H1 (cell line): ENCODE measurements at regions of chr6 and their contacts with region 1.

Region 1: GRCh38 chr6:38813041-38813823 is 98.1 kb downstream of the DNAH8 start:
- DNase-seq: no peak
- H3K4me3 ChIP-seq: no peak overlapping the region
- H3K27ac ChIP-seq: no peak overlapping the region
- H3K4me1 ChIP-seq: no peaks in the 10 kb centered on the region
- H3K27me3 ChIP-seq: no peaks in the 10 kb centered on the region
- CTCF ChIP-seq: no peak
- EP300 ChIP-seq: no peak
- POLR2A ChIP-seq: no peak
- RAD21 ChIP-seq: no peak

Region 2: GRCh38 chr6:38797391-38797790 is 15.8 kb before region 1 on chr6:
- CTCF ChIA-PET with region 1: interaction called, 10 read pairs
- POLR2A ChIA-PET with region 1: no interaction called
- DNase-seq: no peak
- H3K4me3 ChIP-seq: no peak overlapping the region
- H3K27ac ChIP-seq: no peak overlapping the region
- H3K4me1 ChIP-seq: no peaks in the 10 kb centered on the region; a peak in 1 of 7 replicates
- H3K27me3 ChIP-seq: no peaks in the 10 kb centered on the region
- CTCF ChIP-seq: no peak
- EP300 ChIP-seq: no peak
- POLR2A ChIP-seq: no peak
- RAD21 ChIP-seq: no peak

Region 3: GRCh38 chr6:38824243-38824894 is 11.1 kb after region 1 on chr6:
- CTCF ChIA-PET with region 1: no interaction called
- POLR2A ChIA-PET with region 1: no interaction called
- DNase-seq: no peak
- H3K4me3 ChIP-seq: no peak overlapping the region
- H3K27ac ChIP-seq: no peak overlapping the region
- H3K4me1 ChIP-seq: no peaks in the 10 kb centered on the region
- H3K27me3 ChIP-seq: no peaks in the 10 kb centered on the region
- CTCF ChIP-seq: no peak
- EP300 ChIP-seq: no peak
- POLR2A ChIP-seq: no peak
- RAD21 ChIP-seq: no peak